Activated CD4-positive, alpha-beta T cell treated with anti-CD3 and anti-CD28 coated beads, Interleukin-2, amount 10 ng/mL, durations not matched to agents 24 days and 14 days (primary cell): ENCODE measurements at regions of chr2 and their contacts with region 1.

Region 1: DNA sequence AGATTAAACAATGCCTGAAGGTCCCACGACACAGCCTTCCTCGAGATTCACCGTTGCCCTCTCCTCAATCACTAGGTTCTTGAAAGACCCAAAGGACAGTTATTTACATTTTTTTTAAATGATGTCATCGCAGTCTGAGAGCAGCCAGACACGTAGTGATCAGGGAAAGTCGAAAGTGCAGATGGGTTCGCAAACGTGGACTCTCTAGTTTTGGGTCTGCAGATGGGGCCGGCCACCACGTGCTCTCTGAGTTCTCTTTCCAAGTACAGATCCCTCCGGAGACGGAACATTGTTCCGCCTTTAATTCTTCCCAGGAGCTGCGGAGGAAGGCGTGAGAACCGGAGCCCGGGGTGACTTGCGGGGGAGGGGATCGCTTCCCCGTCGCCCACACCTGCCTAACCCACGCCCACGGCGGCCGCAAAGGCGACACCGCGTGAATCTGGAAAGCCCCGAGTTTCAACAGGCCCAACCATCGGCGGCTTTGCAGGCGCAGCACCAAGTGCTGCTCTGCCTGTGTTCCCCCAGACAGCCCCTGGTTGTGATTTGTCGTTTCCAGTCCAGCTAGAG is 54.3 kb downstream of the PKDCC start:
- DNase-seq: peak; percentile 98
- H3K4me3 Mint-ChIP-seq: peak overlapping the region; percentile 74
- H3K27ac Mint-ChIP-seq: peak overlapping the region; percentile 93
- H3K4me1 Mint-ChIP-seq: peaks cover 57% of the 10 kb centered on the region
- H3K27me3 Mint-ChIP-seq: no peaks in the 10 kb centered on the region

Region 2: DNA sequence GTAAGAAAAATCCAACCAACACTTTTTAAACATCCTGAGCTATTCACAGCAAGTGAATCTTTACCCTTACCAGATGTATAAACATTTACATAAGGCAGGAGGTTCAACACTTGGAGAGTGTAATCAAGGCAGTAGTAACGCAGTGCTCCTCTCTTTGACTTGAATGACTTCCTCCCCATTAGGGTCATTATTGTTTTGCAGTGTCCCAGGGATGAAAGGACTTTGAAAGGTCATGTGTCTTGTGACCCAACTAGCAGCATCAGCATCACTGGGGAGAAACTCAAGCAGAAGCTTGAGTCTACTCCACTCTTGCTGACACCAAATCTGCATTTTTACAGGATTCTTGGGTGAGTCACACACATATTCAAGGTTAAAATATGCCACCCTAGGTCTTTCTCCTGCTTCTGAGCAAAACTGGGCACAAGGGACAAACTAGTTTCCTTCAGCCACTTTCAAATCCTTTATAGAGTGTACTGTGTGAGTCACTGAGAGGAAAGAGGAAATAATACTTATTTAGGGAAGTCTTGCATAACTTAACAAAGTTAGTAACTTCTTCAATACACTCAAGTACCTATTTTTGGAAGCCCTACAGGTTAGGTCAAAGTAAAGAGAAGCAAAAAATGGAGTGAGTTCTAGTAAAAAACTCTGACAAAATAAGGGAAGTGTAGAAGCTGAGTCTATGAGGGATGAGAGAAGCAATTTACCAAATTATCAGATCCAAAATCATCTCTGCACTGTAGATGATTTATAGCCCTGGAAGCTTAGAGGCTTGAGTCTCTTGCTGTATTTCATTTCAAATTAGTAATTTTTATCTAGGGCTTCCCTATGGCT is 16.0 kb after region 1 on chr2:
- intact Hi-C with region 1: loop called (anchors 1 kb)
- DNase-seq: no peak
- H3K4me3 Mint-ChIP-seq: peak overlapping the region; percentile 6
- H3K27ac Mint-ChIP-seq: peak overlapping the region; percentile 23
- H3K4me1 Mint-ChIP-seq: peaks cover 30% of the 10 kb centered on the region
- H3K27me3 Mint-ChIP-seq: peaks cover 2% of the 10 kb centered on the region

Region 3: GRCh38 chr2:42124011-42124785 is 22.1 kb after region 1 on chr2:
- intact Hi-C with region 1: loop called (anchors 1 kb)
- DNase-seq: peak; percentile 74
- H3K4me3 Mint-ChIP-seq: peak overlapping the region; percentile 65
- H3K27ac Mint-ChIP-seq: peak overlapping the region; percentile 82
- H3K4me1 Mint-ChIP-seq: peaks cover 57% of the 10 kb centered on the region
- H3K27me3 Mint-ChIP-seq: no peaks in the 10 kb centered on the region

Region 4: DNA sequence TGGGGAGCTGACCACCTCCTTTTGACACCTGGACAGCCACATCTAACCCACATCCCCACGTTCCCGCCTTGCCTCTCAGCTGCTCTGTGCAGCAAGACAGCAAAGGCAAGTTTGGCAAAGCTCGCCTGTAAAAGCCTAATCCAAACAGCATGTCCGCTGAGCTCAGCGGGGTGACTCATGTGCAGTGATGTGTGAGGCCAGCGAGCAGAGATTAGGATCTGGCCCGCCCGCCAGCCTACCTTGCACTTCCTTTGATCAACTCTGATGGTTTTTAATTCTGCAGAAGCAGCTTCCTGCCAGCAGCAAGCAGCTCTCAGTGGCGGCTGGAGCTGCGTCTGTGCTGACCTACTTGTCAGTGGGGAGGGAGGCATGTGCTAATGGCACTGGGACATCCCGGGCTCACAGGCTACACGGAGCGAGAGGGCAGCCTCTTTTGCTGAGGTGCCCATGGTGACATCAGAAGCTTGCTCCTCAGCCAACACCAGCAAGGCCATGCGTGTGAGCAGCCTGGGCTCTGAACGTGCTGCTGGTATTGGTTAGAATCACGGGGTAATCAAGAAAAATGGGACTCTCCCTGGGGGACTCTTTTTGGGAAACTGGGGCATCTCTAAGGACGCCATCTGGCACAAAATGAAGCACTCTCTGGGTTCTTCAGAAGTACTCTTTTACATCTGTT is 31.0 kb after region 1 on chr2:
- intact Hi-C with region 1: loop called (anchors 2 kb)
- DNase-seq: peak; percentile 96
- H3K4me3 Mint-ChIP-seq: peak overlapping the region; percentile 78
- H3K27ac Mint-ChIP-seq: peak overlapping the region; percentile 91
- H3K4me1 Mint-ChIP-seq: peaks cover 76% of the 10 kb centered on the region
- H3K27me3 Mint-ChIP-seq: no peaks in the 10 kb centered on the region

Region 5: GRCh38 chr2:42169100-42169873 is 67.2 kb after region 1 on chr2 and contains the start of gene EML4:
- intact Hi-C with region 1: loop called (anchors 1 kb)
- DNase-seq: peak; percentile 98
- H3K4me3 Mint-ChIP-seq: no peak within 1 kb of the TSS
- H3K27ac Mint-ChIP-seq: peak within 1 kb of the TSS; percentile 23
- H3K4me1 Mint-ChIP-seq: peaks cover 18% of the 10 kb centered on the region
- H3K27me3 Mint-ChIP-seq: peaks cover 5% of the 10 kb centered on the region
- total RNA-seq, gene EML4: 51.3 and 54.9 TPM in 2 replicates

Region 6: GRCh38 chr2:42494355-42495233 is 392.5 kb after region 1 on chr2:
- intact Hi-C with region 1: loop called (anchors 5 kb)
- DNase-seq: peak; percentile 92
- H3K4me3 Mint-ChIP-seq: peak overlapping the region; percentile 86
- H3K27ac Mint-ChIP-seq: peak overlapping the region; percentile 76
- H3K4me1 Mint-ChIP-seq: peaks cover 10% of the 10 kb centered on the region
- H3K27me3 Mint-ChIP-seq: peaks cover 37% of the 10 kb centered on the region